Transverse colon (tissue), 4 donors: ENCODE measurements at regions of chr16 and their contacts with region 1.

Region 1: GRCh38 chr16:25235991-25236390 is 19.2 kb downstream of the AQP8 start:
- DNase-seq: no peak
- H3K4me3 ChIP-seq: no peak overlapping the region
- H3K27ac ChIP-seq: no peak overlapping the region
- H3K4me1 ChIP-seq: no peaks in the 10 kb centered on the region
- H3K27me3 ChIP-seq: no peaks in the 10 kb centered on the region
- CTCF ChIP-seq: no peak
- EP300 ChIP-seq: no peak
- POLR2A ChIP-seq: no peak

Region 2: GRCh38 chr16:24539291-24539849 is 696.6 kb before region 1 on chr16 and contains the start of gene RBBP6:
- in situ Hi-C with region 1: loop called in 1 of 4 experiments (anchors 25 kb)
- intact Hi-C with region 1: no loop called
- DNase-seq: peak; percentile 95
- H3K4me3 ChIP-seq: peak within 1 kb of the TSS; percentile 92 to 100 (median 96)
- H3K27ac ChIP-seq: peak within 1 kb of the TSS; percentile 100
- H3K4me1 ChIP-seq: peaks cover 19 to 34% (median 27%) of the 10 kb centered on the region in 4 donors
- H3K27me3 ChIP-seq: no peaks in the 10 kb centered on the region
- CTCF ChIP-seq: peak in 4 of 5 experiments; percentile 1 to 60 (median 25)
- EP300 ChIP-seq: peak; percentile 37
- POLR2A ChIP-seq: peak; percentile 99
- total RNA-seq, gene RBBP6: 38.5 to 67.5 (median 58.5) TPM

Region 3: GRCh38 chr16:25066747-25067631 is 169.0 kb before region 1 on chr16:
- in situ Hi-C with region 1: no loop called
- intact Hi-C with region 1: no loop called
- DNase-seq: peak; percentile 88
- H3K4me3 ChIP-seq: peak overlapping the region; percentile 77 to 95 (median 87)
- H3K27ac ChIP-seq: peak overlapping the region; percentile 93 to 96 (median 95)
- H3K4me1 ChIP-seq: peaks cover 0 to 16% (median 11%) of the 10 kb centered on the region in 4 donors
- H3K27me3 ChIP-seq: no peaks in the 10 kb centered on the region
- CTCF ChIP-seq: peak in 1 of 5 experiments; percentile 9
- EP300 ChIP-seq: no peak
- POLR2A ChIP-seq: peak; percentile 87

Region 4: DNA sequence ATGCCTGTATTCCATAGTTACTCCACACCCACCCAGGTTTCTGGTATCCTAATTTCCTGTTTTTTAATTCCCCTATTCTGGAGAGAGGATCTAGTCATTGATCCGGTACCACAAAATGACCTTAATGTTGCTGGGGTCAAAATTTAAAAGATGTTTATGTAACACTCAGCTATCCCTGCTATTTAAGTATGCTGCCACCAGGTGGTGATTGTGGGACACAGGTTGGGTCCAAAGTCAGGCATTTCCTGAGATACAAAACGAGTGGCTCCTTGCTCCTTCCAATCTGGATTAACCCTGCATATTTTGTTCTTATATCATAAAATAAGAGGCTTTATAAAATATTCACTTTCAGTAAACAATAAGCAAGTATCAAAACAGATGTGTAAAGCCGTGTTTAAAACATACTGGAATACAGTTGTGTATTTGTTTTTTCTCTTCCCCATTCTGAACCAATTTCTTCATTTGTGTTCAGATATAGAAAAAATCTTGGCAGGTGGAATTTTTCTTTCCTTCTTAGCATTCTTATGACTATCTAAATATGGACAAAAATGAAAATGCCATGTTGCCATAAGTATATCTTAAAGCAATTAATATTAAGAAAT is 472.1 kb after region 1 on chr16:
- in situ Hi-C with region 1: loop called in 1 of 4 experiments (anchors 25 kb)
- intact Hi-C with region 1: no loop called
- DNase-seq: peak; percentile 10
- H3K4me3 ChIP-seq: no peak overlapping the region
- H3K27ac ChIP-seq: no peak overlapping the region
- H3K4me1 ChIP-seq: no peaks in the 10 kb centered on the region
- H3K27me3 ChIP-seq: peaks cover 4% of the 10 kb centered on the region
- CTCF ChIP-seq: peak in 4 of 5 experiments; percentile 21 to 51 (median 35)
- EP300 ChIP-seq: no peak
- POLR2A ChIP-seq: no peak

Region 5: GRCh38 chr16:26111900-26112299 is 875.9 kb after region 1 on chr16:
- in situ Hi-C with region 1: no loop called
- intact Hi-C with region 1: loop called (anchors 5 kb)
- DNase-seq: no peak
- H3K4me3 ChIP-seq: no peak overlapping the region
- H3K27ac ChIP-seq: no peak overlapping the region
- H3K4me1 ChIP-seq: no peaks in the 10 kb centered on the region
- H3K27me3 ChIP-seq: no peaks in the 10 kb centered on the region
- CTCF ChIP-seq: no peak
- EP300 ChIP-seq: no peak
- POLR2A ChIP-seq: no peak